Endothelial cell of umbilical vein (primary cell): ENCODE measurements at regions of chr4 and their contacts with region 1.

Region 1: DNA sequence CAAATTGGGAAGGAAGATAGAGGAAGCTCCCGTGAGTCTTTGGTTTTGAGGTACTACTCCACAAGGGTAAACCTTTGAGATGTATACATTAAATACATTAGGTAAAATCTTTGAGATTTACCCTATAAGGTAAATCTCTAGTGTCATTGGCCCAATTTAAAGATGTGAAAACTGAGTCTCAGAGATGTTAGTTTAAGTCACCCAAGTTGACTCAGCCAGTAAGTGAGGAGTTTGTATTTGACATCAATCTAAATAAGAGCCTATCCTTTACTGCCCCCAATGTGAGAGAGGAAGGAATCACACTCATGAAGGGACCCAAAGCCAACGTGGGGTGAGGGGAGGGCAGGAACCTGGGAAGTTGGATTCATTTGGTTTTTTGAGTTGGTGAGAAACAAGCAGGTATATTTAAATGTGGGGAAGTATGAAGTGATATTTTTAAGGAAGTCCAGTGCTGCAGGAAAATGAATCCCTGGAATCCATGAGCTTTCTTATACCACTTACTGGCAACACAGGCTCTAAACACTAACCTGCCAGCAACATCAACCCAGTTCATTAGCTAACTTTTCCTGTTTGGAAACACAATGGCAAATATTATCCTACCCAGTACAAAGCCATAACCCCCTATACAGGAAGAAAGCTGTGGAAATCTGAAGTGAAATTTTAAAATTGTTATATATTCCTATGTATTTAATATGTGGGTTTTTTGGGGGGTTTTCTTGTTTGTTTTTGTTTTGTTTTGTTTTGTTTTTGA is 55.3 kb downstream of the PALLD start:
- DNase-seq: peak; percentile 61
- H3K4me3 ChIP-seq: no peak overlapping the region
- H3K27ac ChIP-seq: no peak overlapping the region
- H3K4me1 ChIP-seq: peaks cover 15% of the 10 kb centered on the region
- H3K27me3 ChIP-seq: no peaks in the 10 kb centered on the region
- CTCF ChIP-seq: no peak
- POLR2A ChIP-seq: no peak

Region 2: GRCh38 chr4:168421671-168422070 is 130.4 kb before region 1 on chr4:
- CTCF ChIA-PET with region 1: no interaction called
- POLR2A ChIA-PET with region 1: no interaction called
- dilution Hi-C with region 1: no loop called
- intact Hi-C with region 1: loop called (anchors 5 kb)
- DNase-seq: peak; percentile 98
- H3K4me3 ChIP-seq: no peak overlapping the region
- H3K27ac ChIP-seq: peak overlapping the region; percentile 76
- H3K4me1 ChIP-seq: peaks cover 21% of the 10 kb centered on the region
- H3K27me3 ChIP-seq: no peaks in the 10 kb centered on the region
- CTCF ChIP-seq: no peak
- POLR2A ChIP-seq: peak; percentile 69

Region 3: DNA sequence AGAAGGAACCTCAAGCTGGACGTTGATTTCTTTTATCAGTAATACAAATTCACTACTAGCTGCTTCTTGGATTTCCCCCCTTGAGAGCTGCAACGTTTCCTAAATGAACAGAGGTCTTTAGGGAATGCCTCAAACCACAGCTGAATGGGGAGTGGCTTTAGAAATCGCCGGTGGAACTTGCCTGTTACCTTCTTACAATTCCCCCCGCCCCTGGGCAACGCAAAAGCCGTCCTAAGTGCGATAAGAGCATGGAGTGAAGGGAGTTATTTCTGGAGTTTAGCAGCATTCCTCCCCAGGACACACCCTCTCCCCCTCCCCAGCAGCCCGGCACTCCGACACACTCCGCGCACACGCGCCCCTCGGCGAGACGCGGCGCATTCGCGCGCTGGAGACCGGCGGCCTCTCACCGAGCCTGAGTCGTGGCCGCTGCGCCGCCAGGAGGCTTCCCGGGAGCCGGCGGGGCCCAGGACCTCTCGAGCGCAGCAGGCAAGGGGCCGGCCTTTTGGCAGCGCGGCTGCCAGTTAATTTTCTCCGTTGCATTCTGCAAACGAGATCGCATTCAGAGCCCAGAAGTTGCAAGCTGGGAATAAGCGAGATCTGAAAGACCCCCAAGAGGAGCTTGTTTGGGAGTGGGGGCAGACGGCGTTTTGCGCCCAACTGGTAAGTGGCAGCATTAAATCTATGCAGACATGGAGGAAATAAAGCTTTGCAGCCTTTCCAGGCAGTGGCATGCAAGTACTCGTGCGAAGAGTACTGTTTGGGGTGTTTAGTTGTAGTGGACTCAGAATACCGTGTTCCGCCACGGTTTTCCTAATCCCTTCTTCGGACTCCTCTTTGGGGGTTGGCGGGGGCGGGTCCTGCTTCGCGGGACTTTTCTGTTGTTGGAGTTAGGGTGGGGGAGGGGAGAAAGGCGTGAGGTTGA is 79.4 kb after region 1 on chr4:
- CTCF ChIA-PET with region 1: no interaction called
- POLR2A ChIA-PET with region 1: no interaction called
- dilution Hi-C with region 1: no loop called
- intact Hi-C with region 1: no loop called
- DNase-seq: peak; percentile 72
- H3K4me3 ChIP-seq: peak overlapping the region; percentile 38 to 77 (median 51)
- H3K27ac ChIP-seq: peak overlapping the region; percentile 42
- H3K4me1 ChIP-seq: peaks cover 27% of the 10 kb centered on the region
- H3K27me3 ChIP-seq: no peaks in the 10 kb centered on the region
- CTCF ChIP-seq: peak; percentile 28 to 59
- POLR2A ChIP-seq: no peak